HEK293 (cell line): ENCODE measurements at regions of chr2 and their contacts with region 1.

Region 1: GRCh38 chr2:182883451-182883850 is 17.0 kb upstream of the FRZB start:
- H3K4me3 ChIP-seq: no peak overlapping the region
- H3K27ac ChIP-seq: no peak overlapping the region
- H3K4me1 ChIP-seq: 0 out of 2 replicates have a peak, but pooled peaks cover 2% of the 10 kb centered on the region
- CTCF ChIP-seq: no peak

Region 2: GRCh38 chr2:181977661-181978350 is 905.6 kb before region 1 on chr2:
- CTCF ChIA-PET with region 1: no interaction called
- POLR2A ChIA-PET with region 1: no interaction called
- H3K4me3 ChIP-seq: no peak overlapping the region
- H3K27ac ChIP-seq: no peak overlapping the region
- H3K4me1 ChIP-seq: no peaks in the 10 kb centered on the region
- CTCF ChIP-seq: no peak

Region 3: GRCh38 chr2:182866461-182867406 is 16.7 kb before region 1 on chr2 and contains the start of gene FRZB:
- CTCF ChIA-PET with region 1: interaction called, 11 read pairs
- POLR2A ChIA-PET with region 1: no interaction called
- H3K4me3 ChIP-seq: peak within 1 kb of the TSS; percentile 25
- H3K27ac ChIP-seq: no peak within 1 kb of the TSS
- H3K4me1 ChIP-seq: peaks cover 10% of the 10 kb centered on the region
- CTCF ChIP-seq: no peak

Region 4: GRCh38 chr2:182915369-182916326 is 32.2 kb after region 1 on chr2:
- CTCF ChIA-PET with region 1: no interaction called
- POLR2A ChIA-PET with region 1: no interaction called
- H3K4me3 ChIP-seq: no peak overlapping the region
- H3K27ac ChIP-seq: no peak overlapping the region
- H3K4me1 ChIP-seq: peaks cover 10% of the 10 kb centered on the region
- CTCF ChIP-seq: no peak